Posterior cingulate gyrus (tissue), 11 donors: ENCODE measurements at regions of chr15 and their contacts with region 1.

Region 1: GRCh38 chr15:96893159-96893906 is 562.8 kb downstream of the NR2F2 start:
- DNase-seq: no peak

Region 2: GRCh38 chr15:95259513-95259912 is 1633.8 kb before region 1 on chr15:
- intact Hi-C with region 1: loop called (anchors 5 kb)
- DNase-seq: peak in 9 of 10 donors; percentile 30 to 91 (median 64)

Region 3: DNA sequence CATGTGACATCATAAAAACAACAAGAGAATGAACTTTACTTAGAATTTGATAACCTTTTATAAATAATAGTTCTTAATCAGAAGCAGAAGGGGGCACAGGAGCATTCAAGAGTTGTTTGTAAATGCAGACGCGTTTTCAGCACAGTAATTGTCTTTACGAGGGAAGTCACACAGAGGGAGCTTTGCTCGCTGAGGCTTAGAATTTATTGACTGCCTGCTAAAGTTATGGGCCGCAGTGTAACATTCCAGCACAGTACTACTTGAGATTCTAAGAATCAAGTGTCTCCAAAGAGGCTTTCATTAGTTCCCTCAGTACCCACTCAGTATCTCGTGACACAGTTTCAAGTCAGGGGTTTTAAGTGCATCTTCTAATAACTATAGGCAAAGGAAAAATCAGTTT is 274.2 kb before region 1 on chr15:
- intact Hi-C with region 1: no loop called
- DNase-seq: no peak